HepG2 (cell line): ENCODE measurements at regions of chr10 and their contacts with region 1.

Region 1: GRCh38 chr10:35126530-35127296 is at the start of gene CREM:
- DNase-seq: peak; percentile 91
- ATAC-seq: peak; percentile 92
- H3K4me3 ChIP-seq: peak within 1 kb of the TSS; percentile 94 to 100 (median 98)
- H3K27ac ChIP-seq: peak within 1 kb of the TSS; percentile 99
- H3K4me1 ChIP-seq: peaks cover 60% of the 10 kb centered on the region
- H3K27me3 ChIP-seq: no peaks in the 10 kb centered on the region; a peak in 1 of 5 replicates
- CTCF ChIP-seq: peak; percentile 89
- EP300 ChIP-seq: peak; percentile 18 to 41; a peak in 2 of 4 replicates
- POLR2A ChIP-seq: peak; percentile 75 to 88
- RAD21 ChIP-seq: no peak; the same call in none of the 2 replicates
- total RNA-seq, gene CREM: 25.4 and 30.6 TPM in 2 replicates

Region 2: DNA sequence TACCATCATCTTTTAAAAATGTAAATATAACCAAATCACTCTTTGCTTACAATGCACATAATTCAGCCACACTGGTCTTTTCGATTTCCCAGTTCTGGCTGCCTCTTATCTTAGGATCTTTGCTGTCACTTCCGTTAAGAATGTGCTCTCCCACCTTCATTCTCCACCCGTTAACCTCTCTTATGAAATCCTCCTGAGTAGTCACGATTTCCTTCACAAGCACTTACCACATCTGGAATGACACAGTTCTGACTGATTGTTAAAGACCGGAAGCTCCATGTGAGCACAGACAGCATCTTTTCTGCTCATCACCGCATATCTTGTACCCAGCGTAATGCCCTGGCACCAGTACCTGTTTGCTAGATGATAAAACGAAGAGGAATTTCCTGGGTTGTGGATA is 120.8 kb before region 1 on chr10:
- CTCF ChIA-PET with region 1: no interaction called
- POLR2A ChIA-PET with region 1: no interaction called
- in situ Hi-C with region 1: no loop called
- intact Hi-C with region 1: no loop called
- DNase-seq: no peak
- ATAC-seq: no peak
- H3K4me3 ChIP-seq: no peak overlapping the region
- H3K27ac ChIP-seq: no peak overlapping the region
- H3K4me1 ChIP-seq: 0 out of 2 replicates have a peak, but pooled peaks cover under 1% of the 10 kb centered on the region
- H3K27me3 ChIP-seq: no peaks in the 10 kb centered on the region
- CTCF ChIP-seq: no peak
- EP300 ChIP-seq: no peak
- POLR2A ChIP-seq: no peak
- RAD21 ChIP-seq: no peak

Region 3: DNA sequence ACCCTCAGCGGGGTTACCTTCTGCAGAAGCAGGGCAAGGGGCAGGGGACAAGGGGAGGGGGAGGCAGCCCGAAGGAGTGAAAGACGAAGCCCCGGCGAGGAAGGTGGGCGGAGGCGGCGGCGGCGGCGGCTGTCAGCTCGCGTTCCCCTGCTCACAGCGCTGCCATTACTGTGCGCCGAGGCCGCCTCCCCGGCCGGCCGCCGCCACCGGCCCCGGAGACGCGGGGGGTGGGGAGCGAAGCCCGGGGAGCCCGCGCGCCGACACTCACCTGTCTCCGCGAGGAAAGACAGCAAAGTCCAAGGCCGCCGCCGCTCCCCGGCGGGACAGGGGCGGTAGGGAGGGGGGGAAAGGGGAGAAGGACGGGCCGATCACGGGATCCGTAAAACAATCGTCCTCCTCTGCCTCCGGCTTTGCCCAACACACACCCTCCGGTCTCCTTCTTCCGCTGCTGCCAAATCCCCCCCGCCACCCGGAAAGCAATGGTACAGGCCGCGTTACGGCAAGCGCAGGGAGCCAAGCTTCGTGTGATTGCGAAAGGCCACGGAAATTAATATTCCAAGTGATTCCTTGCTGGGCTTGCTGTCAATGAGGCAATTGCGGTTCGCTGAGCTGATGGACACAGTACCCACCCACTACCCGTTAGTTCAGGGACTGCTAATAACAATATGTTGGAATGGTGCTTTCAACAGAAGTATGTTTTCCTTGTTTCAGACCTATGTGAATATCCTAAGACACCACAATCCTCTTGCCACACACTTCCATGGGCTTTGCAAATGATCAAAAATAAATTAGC is 36.4 kb before region 1 on chr10 and contains the start of gene CUL2:
- CTCF ChIA-PET with region 1: no interaction called
- POLR2A ChIA-PET with region 1: interaction called, 10 read pairs
- in situ Hi-C with region 1: no loop called
- intact Hi-C with region 1: no loop called
- DNase-seq: peak; percentile 88
- ATAC-seq: peak; percentile 97
- H3K4me3 ChIP-seq: peak within 1 kb of the TSS; percentile 69 to 97 (median 80)
- H3K27ac ChIP-seq: peak within 1 kb of the TSS; percentile 95
- H3K4me1 ChIP-seq: peaks cover 50% of the 10 kb centered on the region
- H3K27me3 ChIP-seq: no peaks in the 10 kb centered on the region
- CTCF ChIP-seq: 0 out of 2 replicates have a peak, but pooled peaks have one; percentile 4
- EP300 ChIP-seq: peak; percentile 28 to 63; a peak in 2 of 4 replicates
- POLR2A ChIP-seq: peak; percentile 58 to 59; a peak in 3 of 4 replicates
- RAD21 ChIP-seq: peak; percentile 39; the same call in 1 of the 2 replicates
- total RNA-seq, gene CUL2: 33.1 and 48.2 TPM in 2 replicates

Region 4: DNA sequence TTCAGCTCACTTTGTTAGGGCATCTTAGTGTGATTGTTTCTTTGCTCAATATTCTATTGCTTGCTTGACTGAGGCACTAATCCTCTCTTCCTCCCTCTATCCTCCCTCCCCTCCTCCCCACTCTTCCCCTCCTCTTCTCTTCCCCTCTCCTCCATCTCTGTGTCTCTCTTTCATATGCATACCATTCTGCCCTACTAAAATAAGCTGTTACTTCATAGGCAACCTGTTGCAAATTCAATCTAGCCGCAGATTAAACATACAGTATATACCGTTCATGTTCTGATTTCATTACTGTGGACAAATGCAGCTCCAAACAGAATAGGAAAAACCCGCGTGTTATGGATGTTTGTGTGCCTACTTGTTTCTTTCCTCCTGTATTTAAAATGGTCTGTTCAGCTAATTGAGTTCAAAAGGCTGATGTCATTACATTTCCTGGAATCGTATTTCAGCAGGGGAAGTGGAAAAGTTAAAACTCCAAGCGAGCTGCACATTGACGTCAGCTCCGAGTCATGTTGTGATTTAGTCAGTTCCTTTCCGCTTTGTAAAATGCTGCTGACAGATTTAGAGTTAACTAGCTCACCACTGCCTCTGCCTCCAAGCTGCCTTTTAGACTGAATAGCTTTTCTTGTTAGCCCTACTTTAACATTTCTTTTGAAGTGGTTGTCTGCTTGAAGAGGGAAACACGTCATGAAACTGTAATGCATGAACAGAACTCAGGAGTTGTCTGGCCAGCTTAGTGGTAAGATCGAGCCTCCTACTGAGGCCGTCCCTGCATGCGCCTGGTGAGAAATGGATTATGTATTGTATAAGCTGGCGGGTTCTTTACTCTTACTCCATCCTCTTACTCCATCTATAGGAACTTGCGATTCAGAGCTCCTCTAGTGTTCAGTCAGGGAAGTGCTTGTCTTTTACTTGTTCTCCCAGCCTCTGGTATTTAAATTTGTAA is 68.9 kb after region 1 on chr10:
- CTCF ChIA-PET with region 1: no interaction called
- POLR2A ChIA-PET with region 1: interaction called, 19 read pairs
- in situ Hi-C with region 1: no loop called
- intact Hi-C with region 1: loop called (anchors 5 kb)
- DNase-seq: peak; percentile 78
- ATAC-seq: peak; percentile 99
- H3K4me3 ChIP-seq: peak overlapping the region; percentile 16 to 39 (median 38); a peak in 4 of 6 replicates
- H3K27ac ChIP-seq: peak overlapping the region; percentile 46
- H3K4me1 ChIP-seq: peaks cover 15% of the 10 kb centered on the region
- H3K27me3 ChIP-seq: no peaks in the 10 kb centered on the region
- CTCF ChIP-seq: peak; percentile 62
- EP300 ChIP-seq: no peak
- POLR2A ChIP-seq: no peak
- RAD21 ChIP-seq: peak; percentile 44

Region 5: GRCh38 chr10:35218339-35218955 is 91.7 kb after region 1 on chr10:
- CTCF ChIA-PET with region 1: interaction called, 7 read pairs
- POLR2A ChIA-PET with region 1: interaction called, 26 read pairs
- in situ Hi-C with region 1: loop called (anchors 5 kb)
- intact Hi-C with region 1: loop called (anchors 1 kb)
- DNase-seq: peak; percentile 77
- ATAC-seq: peak; percentile 62
- H3K4me3 ChIP-seq: no peak overlapping the region
- H3K27ac ChIP-seq: no peak overlapping the region
- H3K4me1 ChIP-seq: peaks cover 61% of the 10 kb centered on the region
- H3K27me3 ChIP-seq: no peaks in the 10 kb centered on the region
- CTCF ChIP-seq: peak; percentile 83
- EP300 ChIP-seq: no peak
- POLR2A ChIP-seq: no peak
- RAD21 ChIP-seq: peak; percentile 45; the same call in 1 of the 2 replicates